Common myeloid progenitor, CD34-positive (primary cell): ENCODE measurements at regions of chr1 and their contacts with region 1.

Region 1: GRCh38 chr1:204806943-204807687 is 63.5 kb upstream of the NFASC start:
- DNase-seq: peak; percentile 87 to 91 (median 89)
- H3K4me3 ChIP-seq: peak overlapping the region in 6 of 7 experiments; percentile 16 to 84 (median 66)
- H3K27ac ChIP-seq: no peak overlapping the region
- H3K4me1 ChIP-seq: peaks cover 3 to 20% (median 10%) of the 10 kb centered on the region in 4 experiments
- H3K27me3 ChIP-seq: no peaks in the 10 kb centered on the region

Region 2: GRCh38 chr1:204506961-204507387 is 300.1 kb before region 1 on chr1:
- CTCF ChIA-PET with region 1: interaction called, 10 read pairs
- POLR2A ChIA-PET with region 1: no interaction called
- DNase-seq: peak; percentile 95 to 98 (median 98)
- H3K4me3 ChIP-seq: peak overlapping the region in 6 of 7 experiments; percentile 65 to 95 (median 80)
- H3K27ac ChIP-seq: peak overlapping the region; percentile 89 to 99
- H3K4me1 ChIP-seq: peaks cover 3 to 34% (median 14%) of the 10 kb centered on the region in 4 experiments
- H3K27me3 ChIP-seq: no peaks in the 10 kb centered on the region

Region 3: DNA sequence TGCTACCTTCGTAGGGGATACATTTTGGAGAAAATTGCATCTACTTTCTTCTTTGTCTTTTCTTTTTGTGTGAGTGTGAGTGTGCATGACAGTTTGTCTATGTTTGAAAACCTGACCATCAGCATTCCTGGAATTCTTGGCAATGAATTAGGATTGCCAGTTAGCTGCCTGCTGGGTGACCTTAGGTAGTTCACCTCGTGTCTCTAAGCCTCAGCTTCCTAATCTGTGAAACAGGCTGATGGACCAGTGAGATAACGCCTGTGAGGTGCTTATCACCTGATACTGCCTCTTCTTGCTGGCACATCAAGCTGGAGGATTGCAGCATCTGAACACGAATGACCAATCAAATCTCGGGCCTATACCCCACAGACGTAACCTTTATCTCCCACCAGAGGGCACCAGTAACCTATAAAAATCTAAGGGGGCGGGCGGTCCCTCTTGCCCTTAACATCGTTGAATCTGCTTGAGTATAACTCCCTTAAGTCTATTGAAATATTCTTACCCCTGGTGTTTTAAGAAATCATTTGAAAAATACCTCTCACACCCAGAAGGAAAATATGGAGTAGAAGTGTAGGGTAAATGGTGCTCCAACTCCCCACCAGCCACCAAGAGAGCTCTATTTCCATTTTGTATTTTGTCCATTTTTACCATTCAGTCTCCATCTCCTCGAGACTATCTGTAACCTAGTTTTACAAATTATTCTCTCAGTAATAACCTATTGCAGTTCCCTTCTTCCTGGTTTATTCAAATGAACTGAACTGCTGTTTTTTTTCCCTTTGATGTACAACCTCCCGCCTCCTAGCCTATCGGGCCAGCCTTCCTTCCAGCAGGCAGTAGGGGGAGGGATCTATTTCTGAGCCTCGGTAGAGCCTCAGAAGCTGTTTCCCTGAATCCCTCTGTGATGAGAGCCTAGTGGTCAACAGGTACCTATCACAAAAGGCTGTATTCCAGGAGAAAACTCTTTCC is 241.2 kb before region 1 on chr1:
- CTCF ChIA-PET with region 1: interaction called, 168 read pairs
- POLR2A ChIA-PET with region 1: interaction called, 4 read pairs
- DNase-seq: peak; percentile 75 to 87 (median 87)
- H3K4me3 ChIP-seq: no peak overlapping the region
- H3K27ac ChIP-seq: no peak overlapping the region
- H3K4me1 ChIP-seq: no peaks in the 10 kb centered on the region
- H3K27me3 ChIP-seq: no peaks in the 10 kb centered on the region

Region 4: GRCh38 chr1:204763706-204764427 is 43.2 kb before region 1 on chr1:
- CTCF ChIA-PET with region 1: interaction called, 39 read pairs
- POLR2A ChIA-PET with region 1: no interaction called
- DNase-seq: peak; percentile 69 to 84 (median 83)
- H3K4me3 ChIP-seq: peak overlapping the region in 2 of 7 experiments; percentile 12 to 48
- H3K27ac ChIP-seq: no peak overlapping the region
- H3K4me1 ChIP-seq: peaks cover 0 to 10% (median 5%) of the 10 kb centered on the region in 4 experiments
- H3K27me3 ChIP-seq: peaks cover 0 to 23% (median 2%) of the 10 kb centered on the region in 5 experiments

Region 5: DNA sequence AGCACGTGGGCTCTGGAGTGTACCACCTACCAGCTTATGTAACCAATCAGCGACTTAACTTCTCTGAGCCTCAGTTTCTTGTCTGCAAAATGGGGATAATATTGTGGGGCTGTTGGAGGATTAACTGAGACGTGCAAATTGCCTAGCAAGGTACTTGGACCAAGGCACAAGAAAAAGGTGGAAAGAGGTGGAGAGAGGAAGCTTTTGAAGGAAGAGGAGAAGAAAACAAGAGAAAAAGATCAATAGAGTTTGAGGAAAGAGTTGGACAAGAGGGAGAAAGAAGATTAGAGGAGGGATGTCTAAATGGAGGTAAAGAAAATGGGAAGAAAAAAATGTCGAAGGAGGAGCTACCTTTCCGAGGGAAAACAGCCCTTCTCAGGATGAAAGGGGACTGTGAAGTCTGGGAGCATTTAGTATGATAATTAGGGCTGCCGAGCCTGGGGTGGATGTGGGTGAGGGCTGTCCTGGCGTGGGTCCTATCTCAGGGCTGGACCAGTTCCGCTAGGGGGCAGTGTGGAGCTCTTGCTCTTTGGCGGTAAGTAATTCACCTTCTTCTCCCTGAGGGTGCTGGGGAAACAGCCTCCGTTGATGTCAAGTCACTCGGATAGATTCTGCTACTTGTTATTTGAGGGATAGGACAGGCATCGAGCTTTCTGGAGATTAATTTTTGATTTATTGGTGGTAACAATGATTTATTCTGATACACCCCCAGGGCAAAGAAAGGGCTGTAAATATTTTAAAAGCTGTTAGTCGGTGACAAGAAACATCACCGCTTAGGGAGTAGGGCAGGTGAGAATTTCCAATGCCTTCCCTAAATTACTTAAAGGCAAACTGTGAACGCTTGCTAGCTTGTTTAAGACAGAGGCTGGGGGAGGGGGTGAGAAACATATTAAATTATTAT is 15.4 kb before region 1 on chr1:
- CTCF ChIA-PET with region 1: interaction called, 138 read pairs
- POLR2A ChIA-PET with region 1: interaction called, 4 read pairs
- DNase-seq: peak; percentile 79 to 90 (median 85)
- H3K4me3 ChIP-seq: no peak overlapping the region
- H3K27ac ChIP-seq: no peak overlapping the region
- H3K4me1 ChIP-seq: peaks cover 0 to 8% (median 5%) of the 10 kb centered on the region in 4 experiments
- H3K27me3 ChIP-seq: peaks cover 0 to 2% (median 0%) of the 10 kb centered on the region in 5 experiments